ENCODE measurements at regions of chr16 and their contacts with region 1.

Region 1: DNA sequence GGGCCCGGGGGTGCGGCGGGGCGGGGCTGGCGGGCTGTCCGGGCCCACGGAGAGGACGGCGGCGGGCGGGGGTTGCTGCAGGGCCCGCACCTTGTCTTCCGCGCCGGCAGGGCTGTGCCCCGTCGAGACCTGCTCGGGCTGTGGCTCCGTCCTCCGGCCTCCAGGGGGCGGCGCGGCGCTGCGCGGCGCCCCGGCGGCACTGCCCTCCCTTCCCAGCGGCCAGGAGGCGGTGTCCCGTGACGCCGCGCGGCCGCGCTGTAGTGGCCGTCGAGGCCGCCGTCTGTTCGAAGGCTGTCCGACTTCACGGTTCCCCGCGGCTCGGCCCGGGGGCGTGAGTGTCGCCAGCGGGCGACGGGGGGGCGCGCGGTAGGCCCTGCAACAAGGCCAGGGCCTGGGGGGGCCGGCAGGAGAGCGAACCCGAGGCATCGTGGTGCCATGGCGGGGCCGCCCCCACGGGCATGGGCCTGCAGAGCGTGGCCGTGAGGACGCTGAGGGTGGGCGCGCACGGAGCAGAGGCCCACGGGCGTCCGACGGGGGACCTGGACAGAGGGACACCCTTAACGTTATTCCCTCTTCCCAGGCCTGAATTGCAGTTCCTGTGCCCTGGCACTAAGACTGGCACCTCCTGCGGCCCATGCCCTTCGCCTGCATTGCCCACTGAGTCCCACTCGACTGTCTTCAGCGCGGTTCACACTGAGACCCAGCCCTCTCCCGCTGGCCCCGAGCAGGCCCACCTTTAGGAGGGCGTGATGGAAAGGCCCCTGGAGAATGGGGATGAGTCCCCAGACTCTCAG is at the start of gene PLEKHG4:
- DNase-seq: peak; percentile 93
- ATAC-seq: peak; percentile 97
- H3K4me3 ChIP-seq: peak within 1 kb of the TSS; percentile 68
- H3K27ac ChIP-seq: peak within 1 kb of the TSS; percentile 71
- H3K4me1 ChIP-seq: peaks cover 15% of the 10 kb centered on the region
- H3K27me3 ChIP-seq: no peaks in the 10 kb centered on the region
- CTCF ChIP-seq: peak; percentile 60
- total RNA-seq, gene PLEKHG4: 16.2 TPM

Region 2: DNA sequence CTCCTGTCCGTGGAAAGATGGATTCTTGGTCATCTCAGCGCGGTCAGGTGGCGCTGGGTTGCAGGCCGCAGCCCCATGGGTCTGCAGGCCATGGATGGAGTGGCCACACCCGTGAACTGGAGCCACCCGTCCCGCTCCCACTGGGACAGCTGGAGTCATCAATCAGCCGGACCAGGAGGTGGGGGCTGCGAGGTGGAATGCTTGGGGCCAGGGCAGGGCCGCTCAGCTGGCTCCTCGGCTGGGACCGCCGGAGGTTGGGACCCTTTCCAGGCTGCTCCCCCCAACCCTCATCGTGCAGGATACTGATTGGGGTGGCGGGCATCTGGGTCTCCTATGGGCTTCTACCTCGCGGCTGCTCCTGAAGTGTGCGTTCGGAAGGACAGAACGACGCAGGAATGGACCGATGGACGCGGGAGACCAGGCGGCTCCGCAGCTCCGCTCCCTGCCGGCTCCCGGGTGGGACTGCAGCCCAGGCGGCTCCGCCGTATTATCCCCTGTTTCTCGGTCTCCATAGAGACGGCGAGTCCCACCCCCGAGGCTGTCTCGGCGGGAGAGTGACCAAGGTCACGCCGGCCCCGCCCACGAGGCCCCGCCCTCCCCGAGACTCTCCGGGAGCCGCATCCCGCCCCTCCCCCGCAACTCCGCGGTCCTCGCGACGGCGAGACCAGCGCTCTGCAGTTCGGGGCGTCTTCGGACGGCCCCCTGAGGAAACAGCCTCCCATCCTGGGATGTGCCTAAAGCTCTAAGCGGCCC is 113.7 kb after region 1 on chr16 and contains the start of gene TPPP3:
- intact Hi-C with region 1: loop called (anchors 10 kb)
- DNase-seq: peak; percentile 90
- ATAC-seq: peak; percentile 77
- H3K4me3 ChIP-seq: peak within 1 kb of the TSS; percentile 42
- H3K27ac ChIP-seq: peak within 1 kb of the TSS; percentile 71
- H3K4me1 ChIP-seq: peaks cover 40% of the 10 kb centered on the region
- H3K27me3 ChIP-seq: no peaks in the 10 kb centered on the region
- CTCF ChIP-seq: peak; percentile 74
- total RNA-seq, gene TPPP3: 29.7 TPM

Measured in upper lobe of right lung (tissue), 1 donor.